K562 (cell line): ENCODE measurements at regions of chr1 and their contacts with region 1.

Region 1: GRCh38 chr1:9503001-9503675 is 36.1 kb upstream of the SLC25A33 start:
- DNase-seq: no peak
- ATAC-seq: peak; percentile 77
- H3K4me3 ChIP-seq: no peak overlapping the region
- H3K27ac ChIP-seq: no peak overlapping the region
- H3K4me1 ChIP-seq: peaks cover 0 to 2% of the 10 kb centered on the region in 2 experiments; a peak in 1 of 5 replicates
- H3K27me3 ChIP-seq: peaks cover 49 to 65% of the 10 kb centered on the region in 2 experiments
- CTCF ChIP-seq: no peak
- EP300 ChIP-seq: no peak; the same call in 1 of the 2 replicates
- POLR2A ChIP-seq: no peak
- RAD21 ChIP-seq: no peak

Region 2: GRCh38 chr1:9388335-9389180 is 114.6 kb before region 1 on chr1:
- CTCF ChIA-PET with region 1: no interaction called
- POLR2A ChIA-PET with region 1: no interaction called
- in situ Hi-C with region 1: no loop called
- intact Hi-C with region 1: no loop called
- DNase-seq: peak in 2 of 4 experiments; percentile 31 to 53
- ATAC-seq: peak; percentile 59; the same call in 2 of the 3 replicates
- H3K4me3 ChIP-seq: no peak overlapping the region
- H3K27ac ChIP-seq: no peak overlapping the region
- H3K4me1 ChIP-seq: peaks cover 0 to 13% of the 10 kb centered on the region in 2 experiments; a peak in 4 of 5 replicates
- H3K27me3 ChIP-seq: peaks cover 37 to 80% of the 10 kb centered on the region in 2 experiments
- CTCF ChIP-seq: no peak
- EP300 ChIP-seq: no peak
- POLR2A ChIP-seq: no peak
- RAD21 ChIP-seq: no peak

Region 3: GRCh38 chr1:9438431-9439073 is 64.6 kb before region 1 on chr1:
- CTCF ChIA-PET with region 1: no interaction called
- POLR2A ChIA-PET with region 1: no interaction called
- in situ Hi-C with region 1: no loop called
- intact Hi-C with region 1: no loop called
- DNase-seq: no peak
- ATAC-seq: no peak
- H3K4me3 ChIP-seq: no peak overlapping the region
- H3K27ac ChIP-seq: no peak overlapping the region
- H3K4me1 ChIP-seq: peaks cover 5% of the 10 kb centered on the region in 2 experiments; a peak in 2 of 5 replicates
- H3K27me3 ChIP-seq: peaks cover 36 to 70% of the 10 kb centered on the region in 2 experiments
- CTCF ChIP-seq: no peak
- EP300 ChIP-seq: no peak
- POLR2A ChIP-seq: no peak
- RAD21 ChIP-seq: no peak

Region 4: GRCh38 chr1:9449106-9449627 is 54.0 kb before region 1 on chr1:
- CTCF ChIA-PET with region 1: no interaction called
- POLR2A ChIA-PET with region 1: no interaction called
- in situ Hi-C with region 1: no loop called
- intact Hi-C with region 1: no loop called
- DNase-seq: no peak
- ATAC-seq: no peak
- H3K4me3 ChIP-seq: no peak overlapping the region
- H3K27ac ChIP-seq: no peak overlapping the region
- H3K4me1 ChIP-seq: peaks cover 0 to 5% of the 10 kb centered on the region in 2 experiments; a peak in 3 of 5 replicates
- H3K27me3 ChIP-seq: peaks cover 43 to 73% of the 10 kb centered on the region in 2 experiments
- CTCF ChIP-seq: no peak
- EP300 ChIP-seq: no peak
- POLR2A ChIP-seq: no peak
- RAD21 ChIP-seq: no peak

Region 5: GRCh38 chr1:9473032-9473792 is 29.9 kb before region 1 on chr1:
- CTCF ChIA-PET with region 1: no interaction called
- POLR2A ChIA-PET with region 1: no interaction called
- in situ Hi-C with region 1: no loop called
- intact Hi-C with region 1: no loop called
- DNase-seq: peak; percentile 38 to 59 (median 52)
- ATAC-seq: peak; percentile 92
- H3K4me3 ChIP-seq: no peak overlapping the region
- H3K27ac ChIP-seq: no peak overlapping the region
- H3K4me1 ChIP-seq: peaks cover 0 to 4% of the 10 kb centered on the region in 2 experiments; a peak in 1 of 5 replicates
- H3K27me3 ChIP-seq: peaks cover 22 to 63% of the 10 kb centered on the region in 2 experiments; a peak in 4 of 5 replicates
- CTCF ChIP-seq: no peak
- EP300 ChIP-seq: no peak
- POLR2A ChIP-seq: no peak
- RAD21 ChIP-seq: no peak

Region 6: DNA sequence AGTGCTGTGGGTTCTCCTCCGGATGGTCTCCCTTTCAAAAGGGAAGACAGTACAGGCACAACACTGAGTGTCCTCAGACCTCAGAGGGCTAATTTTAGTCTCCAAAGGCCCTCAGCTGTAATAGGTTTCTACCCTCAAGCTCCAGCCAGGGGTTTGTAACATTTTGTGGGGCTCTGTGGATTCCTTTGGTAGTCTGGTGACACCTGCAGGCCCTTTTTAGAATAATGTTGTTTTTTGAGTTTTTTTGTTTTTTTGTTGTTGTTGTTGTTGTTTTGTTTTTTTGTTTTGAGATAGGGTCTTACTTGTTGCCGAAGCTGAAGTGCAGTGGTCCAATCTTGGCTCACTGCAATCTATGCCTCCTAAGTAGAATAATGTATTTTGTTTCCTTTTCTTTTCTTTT is 70.6 kb after region 1 on chr1:
- CTCF ChIA-PET with region 1: interaction called, 6 read pairs
- POLR2A ChIA-PET with region 1: interaction called, 4 read pairs
- in situ Hi-C with region 1: loop called (anchors 5 kb)
- intact Hi-C with region 1: no loop called
- DNase-seq: no peak
- ATAC-seq: 0 out of 3 replicates have a peak, but pooled peaks have one; percentile 42
- H3K4me3 ChIP-seq: no peak overlapping the region
- H3K27ac ChIP-seq: no peak overlapping the region
- H3K4me1 ChIP-seq: no peaks in the 10 kb centered on the region
- H3K27me3 ChIP-seq: no peaks in the 10 kb centered on the region
- CTCF ChIP-seq: peak; percentile 39 to 65 (median 41); a peak in 4 of 6 replicates
- EP300 ChIP-seq: no peak
- POLR2A ChIP-seq: no peak
- RAD21 ChIP-seq: peak; percentile 15 to 56

Region 7: DNA sequence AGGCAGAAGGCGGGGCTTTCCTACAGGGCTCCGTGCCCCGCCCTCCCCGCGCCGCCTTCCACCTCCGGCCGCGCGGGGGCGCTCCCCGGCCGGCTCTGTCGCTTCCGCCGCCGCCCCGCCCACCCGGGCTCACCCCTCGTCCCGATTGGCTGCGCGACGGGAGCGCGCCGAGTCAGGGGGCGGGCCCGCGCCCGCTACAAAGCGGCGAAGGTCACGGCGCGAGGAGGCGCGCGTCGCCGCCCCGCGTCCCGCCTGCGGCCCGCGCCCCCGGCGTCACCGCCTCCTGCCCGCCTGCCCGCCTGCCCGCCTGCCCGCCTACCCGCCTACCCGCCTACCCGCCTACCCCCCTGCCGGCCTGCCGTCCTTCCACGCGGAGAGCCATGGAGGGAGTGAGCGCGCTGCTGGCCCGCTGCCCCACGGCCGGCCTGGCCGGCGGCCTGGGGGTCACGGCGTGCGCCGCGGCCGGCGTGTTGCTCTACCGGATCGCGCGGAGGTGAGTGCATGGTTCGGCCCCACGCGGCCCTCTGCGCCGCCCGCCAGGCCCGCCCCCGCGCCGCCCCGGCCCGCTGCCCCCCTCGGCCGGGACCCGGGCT is 85.5 kb after region 1 on chr1 and contains the start of gene TMEM201:
- CTCF ChIA-PET with region 1: no interaction called
- POLR2A ChIA-PET with region 1: no interaction called
- in situ Hi-C with region 1: no loop called
- intact Hi-C with region 1: loop called (anchors 5 kb)
- DNase-seq: peak; percentile 98 to 99 (median 99)
- ATAC-seq: peak; percentile 90
- H3K4me3 ChIP-seq: peak within 1 kb of the TSS; percentile 61
- H3K27ac ChIP-seq: peak within 1 kb of the TSS; percentile 76
- H3K4me1 ChIP-seq: peaks cover 31 to 52% of the 10 kb centered on the region in 2 experiments
- H3K27me3 ChIP-seq: no peaks in the 10 kb centered on the region
- CTCF ChIP-seq: peak; percentile 69 to 91 (median 89)
- EP300 ChIP-seq: 0 out of 2 replicates have a peak, but pooled peaks have one; percentile 20
- POLR2A ChIP-seq: no peak
- RAD21 ChIP-seq: peak; percentile 28 to 57; a peak in 3 of 4 replicates
- polyA plus RNA-seq, gene TMEM201: 0.42 to 0.46 TPM